IMR-90 (cell line): ENCODE measurements at regions of chr1 and their contacts with region 1.

Region 1: GRCh38 chr1:23763041-23763577 is 15.1 kb upstream of the PITHD1 start:
- DNase-seq: no peak
- ATAC-seq: no peak
- H3K4me3 ChIP-seq: no peak overlapping the region
- H3K27ac ChIP-seq: no peak overlapping the region
- H3K4me1 ChIP-seq: peaks cover 2% of the 10 kb centered on the region; the same call in 1 of the 2 replicates
- H3K27me3 ChIP-seq: no peaks in the 10 kb centered on the region
- CTCF ChIP-seq: no peak
- POLR2A ChIP-seq: no peak
- RAD21 ChIP-seq: no peak

Region 2: GRCh38 chr1:22654692-22655091 is 1108.4 kb before region 1 on chr1:
- CTCF ChIA-PET with region 1: no interaction called
- POLR2A ChIA-PET with region 1: no interaction called
- dilution Hi-C with region 1: no loop called
- in situ Hi-C with region 1: no loop called
- intact Hi-C with region 1: no loop called
- DNase-seq: no peak
- ATAC-seq: no peak
- H3K4me3 ChIP-seq: no peak overlapping the region
- H3K27ac ChIP-seq: no peak overlapping the region
- H3K4me1 ChIP-seq: no peaks in the 10 kb centered on the region
- H3K27me3 ChIP-seq: peaks cover 75% of the 10 kb centered on the region
- CTCF ChIP-seq: no peak
- POLR2A ChIP-seq: no peak
- RAD21 ChIP-seq: no peak

Region 3: GRCh38 chr1:23777979-23778814 is 15.1 kb after region 1 on chr1 and contains the start of gene PITHD1:
- CTCF ChIA-PET with region 1: no interaction called
- POLR2A ChIA-PET with region 1: no interaction called
- dilution Hi-C with region 1: no loop called
- in situ Hi-C with region 1: no loop called
- intact Hi-C with region 1: no loop called
- DNase-seq: peak; percentile 79
- ATAC-seq: peak; percentile 89
- H3K4me3 ChIP-seq: peak within 1 kb of the TSS; percentile 97
- H3K27ac ChIP-seq: peak within 1 kb of the TSS; percentile 83
- H3K4me1 ChIP-seq: peaks cover 7% of the 10 kb centered on the region; the same call in 1 of the 2 replicates
- H3K27me3 ChIP-seq: no peaks in the 10 kb centered on the region
- CTCF ChIP-seq: no peak
- POLR2A ChIP-seq: peak; percentile 89
- RAD21 ChIP-seq: no peak
- total RNA-seq, gene PITHD1: 23.8 and 34.2 TPM in 2 replicates

Region 4: DNA sequence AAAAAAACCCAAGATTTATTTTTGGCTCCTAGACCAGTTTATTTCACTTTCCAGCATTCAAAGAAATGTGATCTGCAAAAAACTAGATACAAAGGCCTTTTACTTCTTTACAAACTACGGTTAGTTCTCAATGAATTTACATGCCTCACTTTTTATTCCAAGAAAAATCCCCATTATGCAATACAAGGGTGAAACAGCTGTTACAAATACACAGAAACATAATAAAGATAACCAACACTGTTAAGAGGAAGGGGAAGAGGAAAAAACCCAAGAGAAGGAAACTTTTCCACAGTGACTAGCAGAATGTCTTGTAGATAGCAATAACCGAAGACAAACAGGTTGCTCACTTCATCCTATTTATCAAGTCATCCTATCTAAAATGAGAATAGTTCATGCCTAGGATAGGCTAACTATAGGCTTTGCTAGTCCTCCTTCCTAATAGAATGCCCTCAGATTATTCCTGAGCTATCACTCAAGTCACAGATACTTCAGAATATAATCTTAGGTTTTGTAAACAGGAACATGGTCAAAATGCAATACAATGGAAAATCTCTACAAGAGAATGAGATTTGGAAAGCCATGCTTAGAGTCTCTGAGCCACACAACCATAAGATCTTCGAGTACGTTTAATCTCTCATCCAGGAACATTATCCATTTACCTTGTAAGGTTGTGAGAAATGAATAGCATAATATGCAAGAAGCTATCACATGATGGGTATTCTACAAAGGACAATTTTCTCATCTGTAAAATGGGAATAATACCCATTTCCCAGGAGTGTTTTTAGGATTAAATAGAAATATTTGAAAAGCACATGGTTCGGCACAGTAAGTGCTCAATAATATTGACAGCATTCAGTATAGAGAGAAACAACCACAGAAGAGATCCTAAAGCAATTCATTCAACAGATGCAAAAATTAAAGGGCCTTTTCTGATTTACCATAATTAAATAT is 202.0 kb after region 1 on chr1:
- CTCF ChIA-PET with region 1: no interaction called
- POLR2A ChIA-PET with region 1: interaction called, 20 read pairs
- dilution Hi-C with region 1: no loop called
- in situ Hi-C with region 1: no loop called
- intact Hi-C with region 1: no loop called
- DNase-seq: peak; percentile 61
- ATAC-seq: no peak; the same call in none of the 2 replicates
- H3K4me3 ChIP-seq: no peak overlapping the region
- H3K27ac ChIP-seq: no peak overlapping the region
- H3K4me1 ChIP-seq: peaks cover 2% of the 10 kb centered on the region
- H3K27me3 ChIP-seq: no peaks in the 10 kb centered on the region
- CTCF ChIP-seq: no peak
- POLR2A ChIP-seq: no peak; the same call in 1 of the 2 replicates
- RAD21 ChIP-seq: no peak

Region 5: GRCh38 chr1:24018611-24019580 is 255.8 kb after region 1 on chr1:
- CTCF ChIA-PET with region 1: no interaction called
- POLR2A ChIA-PET with region 1: no interaction called
- dilution Hi-C with region 1: no loop called
- in situ Hi-C with region 1: no loop called
- intact Hi-C with region 1: no loop called
- DNase-seq: peak; percentile 99
- ATAC-seq: peak; percentile 84
- H3K4me3 ChIP-seq: no peak overlapping the region
- H3K27ac ChIP-seq: peak overlapping the region; percentile 81
- H3K4me1 ChIP-seq: peaks cover 26% of the 10 kb centered on the region
- H3K27me3 ChIP-seq: no peaks in the 10 kb centered on the region
- CTCF ChIP-seq: no peak
- POLR2A ChIP-seq: peak; percentile 59; the same call in 1 of the 2 replicates
- RAD21 ChIP-seq: no peak